BJ (cell line): ENCODE measurements at regions of chr17 and their contacts with region 1.

Region 1: DNA sequence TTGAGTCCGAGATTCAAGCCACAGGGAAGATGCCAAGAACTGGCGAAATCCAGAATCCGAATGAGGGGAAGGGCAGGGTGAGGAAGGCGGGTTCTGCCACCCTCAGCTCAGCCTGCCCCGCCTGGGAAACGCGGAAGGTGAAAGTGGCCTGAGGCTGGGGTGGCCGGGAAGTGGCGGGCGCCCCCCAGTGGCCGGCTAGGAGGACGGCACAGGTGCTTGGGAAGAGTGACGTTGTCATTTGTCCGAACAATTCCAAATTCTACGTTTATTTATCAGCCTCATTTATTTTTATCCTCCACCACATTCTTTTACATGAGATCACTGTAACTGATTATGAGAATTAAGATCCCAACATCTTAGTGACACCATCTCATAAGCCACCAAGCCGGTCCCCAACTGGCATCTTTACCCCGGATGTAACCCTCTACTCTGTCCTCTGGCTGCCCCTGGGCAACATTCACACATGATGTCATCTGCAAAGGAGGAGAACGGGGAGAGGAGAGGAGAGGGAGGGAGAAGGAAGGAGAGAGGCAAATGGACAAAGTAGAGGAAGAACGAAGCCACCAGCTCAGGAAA is 21.3 kb downstream of the SRCIN1 start:
- DNase-seq: no peak
- H3K4me3 ChIP-seq: no peak overlapping the region
- H3K27me3 ChIP-seq: peaks cover 29% of the 10 kb centered on the region
- CTCF ChIP-seq: peak; percentile 95

Region 2: DNA sequence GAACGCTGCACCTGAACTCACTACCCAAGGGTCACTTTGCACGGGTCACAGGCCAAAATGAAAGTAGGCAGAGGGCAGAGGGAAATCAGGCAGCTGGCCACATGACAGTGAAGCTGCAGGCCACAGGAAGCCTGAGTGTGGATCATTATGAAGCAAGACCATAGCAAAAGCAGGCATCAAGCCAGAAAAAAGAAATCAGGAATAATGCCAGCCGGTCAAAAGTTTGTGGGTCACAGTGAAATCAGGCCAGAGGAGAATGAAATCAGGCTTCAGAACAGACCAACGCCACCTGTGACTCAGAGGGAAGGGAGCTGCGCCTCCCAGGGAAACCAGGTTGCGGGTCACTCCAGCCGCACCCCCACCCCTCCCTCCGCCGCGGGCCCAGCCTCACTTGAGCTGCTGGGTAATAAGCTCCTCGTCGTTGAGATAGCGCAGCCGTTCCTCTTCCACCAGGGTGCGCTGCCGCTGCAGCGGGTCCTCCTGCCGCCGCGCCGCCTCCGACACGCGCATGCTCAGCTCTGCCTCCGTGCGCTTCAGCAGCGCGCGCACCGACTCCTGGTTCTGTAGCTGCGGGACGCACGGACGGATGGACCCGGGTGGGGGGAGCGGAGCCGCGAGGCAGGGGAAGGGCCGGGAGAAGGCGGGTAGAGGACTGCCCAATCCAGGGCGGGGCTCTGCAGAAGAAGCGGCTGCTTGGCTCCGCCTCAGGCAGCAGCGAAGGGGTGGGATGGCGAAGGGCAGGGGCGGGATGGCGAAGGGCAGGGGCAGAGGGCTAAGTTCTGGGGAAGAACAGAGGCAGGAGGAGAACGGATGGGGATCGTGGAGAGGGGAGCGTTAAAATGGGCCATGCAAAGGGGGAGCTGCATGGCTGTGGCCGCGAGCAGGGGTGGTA is 26.4 kb before region 1 on chr17:
- CTCF ChIA-PET with region 1: interaction called, 110 read pairs
- POLR2A ChIA-PET with region 1: no interaction called
- DNase-seq: peak; percentile 53
- H3K4me3 ChIP-seq: peak overlapping the region; percentile 35
- H3K27me3 ChIP-seq: peaks cover 4% of the 10 kb centered on the region
- CTCF ChIP-seq: peak; percentile 98

Region 3: DNA sequence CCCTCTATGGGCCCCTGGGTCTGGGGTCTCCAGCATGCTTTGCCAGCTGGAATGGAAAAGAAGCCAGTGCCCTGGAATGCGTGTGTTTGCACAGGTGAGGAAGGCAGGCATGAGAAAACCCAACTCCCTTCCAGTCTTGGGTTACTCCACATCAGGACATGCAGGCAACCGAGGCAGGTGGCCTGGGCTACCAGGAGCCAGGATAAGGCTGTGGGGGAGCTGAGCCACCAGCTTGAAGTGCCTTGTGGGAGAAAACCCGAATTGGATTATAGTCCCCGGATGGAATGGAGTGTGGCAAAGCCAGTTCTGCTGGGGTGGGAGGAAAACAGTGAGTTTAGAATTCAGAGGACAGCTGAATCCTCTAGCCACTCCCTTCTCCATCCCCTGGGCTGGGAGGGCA is 14.1 kb after region 1 on chr17:
- CTCF ChIA-PET with region 1: interaction called, 44 read pairs
- POLR2A ChIA-PET with region 1: no interaction called
- DNase-seq: no peak
- H3K4me3 ChIP-seq: no peak overlapping the region
- H3K27me3 ChIP-seq: peaks cover 53% of the 10 kb centered on the region
- CTCF ChIP-seq: no peak

Region 4: GRCh38 chr17:38604479-38605218 is 20.2 kb after region 1 on chr17:
- CTCF ChIA-PET with region 1: interaction called, 44 read pairs
- POLR2A ChIA-PET with region 1: no interaction called
- DNase-seq: no peak
- H3K4me3 ChIP-seq: no peak overlapping the region
- H3K27me3 ChIP-seq: peaks cover 47% of the 10 kb centered on the region
- CTCF ChIP-seq: no peak

Region 5: DNA sequence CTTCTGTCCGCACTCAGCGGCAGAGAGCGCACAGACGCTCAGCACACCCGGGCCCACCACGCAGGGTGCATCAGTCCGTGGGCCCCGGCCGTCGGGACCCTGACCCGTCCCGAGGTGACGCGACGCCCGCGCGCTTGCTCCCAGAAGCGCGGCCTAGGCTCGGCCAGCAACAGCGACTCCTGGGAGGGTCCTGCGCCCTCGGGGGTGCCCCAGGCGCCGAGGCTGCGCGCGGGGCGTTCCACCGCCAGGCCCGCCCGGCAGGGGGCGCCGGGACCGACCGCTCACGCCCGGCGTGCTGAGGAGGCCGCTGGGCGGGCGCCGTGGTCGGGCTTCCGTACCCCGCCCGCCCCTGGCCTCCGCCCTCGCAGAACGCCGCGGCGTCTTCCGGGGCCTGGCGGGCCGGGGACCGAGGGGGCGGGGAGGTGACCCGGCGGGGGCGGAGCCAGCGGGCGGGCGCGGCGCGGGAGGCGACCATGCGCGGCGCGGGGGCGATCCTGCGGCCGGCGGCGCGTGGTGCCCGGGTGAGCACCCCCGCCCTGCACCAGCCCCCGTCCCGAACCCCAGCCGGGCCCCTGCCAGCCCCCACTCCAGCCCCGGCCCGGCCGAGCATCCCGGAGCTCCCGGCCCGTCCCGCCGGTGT is 145.6 kb after region 1 on chr17 and contains the start of gene CISD3:
- CTCF ChIA-PET with region 1: no interaction called
- POLR2A ChIA-PET with region 1: no interaction called
- DNase-seq: peak; percentile 20
- H3K4me3 ChIP-seq: peak within 1 kb of the TSS; percentile 63
- H3K27me3 ChIP-seq: no peaks in the 10 kb centered on the region
- CTCF ChIP-seq: no peak; the same call in 1 of the 2 replicates
- polyA plus RNA-seq, gene CISD3: 15.1 and 17.1 TPM in 2 replicates